ENCODE measurements at regions of chr7 and their contacts with region 1.

Region 1: DNA sequence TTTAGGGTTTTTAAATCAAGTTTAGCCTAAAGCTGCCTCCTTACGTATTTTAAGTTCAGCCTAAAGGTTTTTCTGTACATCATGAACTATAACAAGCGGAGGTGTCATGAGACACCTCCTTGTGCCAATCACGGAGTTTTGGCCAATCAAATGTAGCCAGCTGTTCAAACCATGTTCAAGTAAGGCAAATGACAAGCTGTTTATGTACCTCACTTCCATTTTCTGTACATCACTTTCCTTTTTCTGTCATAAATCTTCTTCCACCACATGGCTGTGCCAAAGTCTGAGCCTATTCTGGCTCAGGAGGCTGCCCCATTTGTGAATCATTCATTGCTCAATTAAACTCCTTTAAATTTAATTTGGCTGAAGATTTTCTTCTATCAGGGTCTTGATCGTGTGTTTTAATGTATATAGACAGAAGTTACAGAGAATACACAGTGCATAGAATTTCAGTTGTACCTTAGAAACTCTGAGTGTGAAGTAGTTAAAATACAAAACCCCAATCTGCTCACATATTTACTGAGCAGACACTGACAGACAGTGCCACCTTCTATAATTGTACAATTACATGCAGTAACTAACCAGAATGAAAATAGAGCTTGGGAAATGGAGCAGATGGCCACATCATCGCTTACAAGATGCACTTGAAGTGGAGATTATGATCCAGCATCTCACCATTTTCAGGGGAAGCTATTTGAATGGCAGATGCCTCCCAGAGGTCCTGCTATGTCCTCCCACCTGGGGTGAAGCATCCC is 76.9 kb upstream of the LANCL2 start:
- DNase-seq: no peak
- H3K4me3 ChIP-seq: no peak overlapping the region
- H3K27ac ChIP-seq: no peak overlapping the region
- H3K4me1 ChIP-seq: no peaks in the 10 kb centered on the region; a peak in 1 of 4 replicates
- H3K27me3 ChIP-seq: 0 out of 2 replicates have a peak, but pooled peaks cover 4% of the 10 kb centered on the region
- CTCF ChIP-seq: peak; percentile 38
- EP300 ChIP-seq: no peak
- RAD21 ChIP-seq: peak; percentile 37

Region 2: DNA sequence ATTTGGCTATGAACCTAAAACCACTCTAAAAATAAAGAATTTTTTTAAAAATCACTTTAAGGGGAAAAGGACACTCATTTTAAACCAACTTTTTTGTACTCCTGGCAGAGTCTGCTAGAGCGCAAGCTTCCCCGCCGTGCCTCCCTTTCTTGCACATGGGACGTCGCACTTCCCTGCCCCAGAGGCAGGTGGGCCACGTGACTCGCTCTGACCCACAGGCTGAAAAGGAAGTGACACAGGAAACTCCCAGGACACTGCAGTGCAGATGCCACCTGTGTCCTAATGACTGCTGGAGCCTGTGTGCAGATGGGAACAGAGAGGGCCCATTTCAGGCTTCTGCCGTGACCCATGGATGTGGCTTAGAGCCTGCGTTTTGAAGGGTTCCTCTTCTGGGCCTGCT is 65.2 kb before region 1 on chr7:
- CTCF ChIA-PET with region 1: no interaction called
- POLR2A ChIA-PET with region 1: no interaction called
- DNase-seq: no peak
- H3K4me3 ChIP-seq: no peak overlapping the region
- H3K27ac ChIP-seq: no peak overlapping the region
- H3K4me1 ChIP-seq: no peaks in the 10 kb centered on the region; a peak in 1 of 4 replicates
- H3K27me3 ChIP-seq: no peaks in the 10 kb centered on the region
- CTCF ChIP-seq: no peak
- EP300 ChIP-seq: no peak
- RAD21 ChIP-seq: no peak

Region 3: GRCh38 chr7:55348499-55348898 is 60.3 kb after region 1 on chr7:
- CTCF ChIA-PET with region 1: no interaction called
- POLR2A ChIA-PET with region 1: no interaction called
- DNase-seq: no peak
- H3K4me3 ChIP-seq: peak overlapping the region in 1 of 2 experiments; percentile 32; a peak in 1 of 4 replicates
- H3K27ac ChIP-seq: peak overlapping the region; percentile 36 to 82; a peak in 3 of 4 replicates
- H3K4me1 ChIP-seq: peaks cover 0 to 16% of the 10 kb centered on the region in 2 experiments; a peak in 2 of 4 replicates
- H3K27me3 ChIP-seq: no peaks in the 10 kb centered on the region
- CTCF ChIP-seq: no peak
- EP300 ChIP-seq: peak in 1 of 2 experiments; percentile 81; a peak in 1 of 4 replicates
- RAD21 ChIP-seq: no peak

Region 4: GRCh38 chr7:55415173-55415778 is 127.0 kb after region 1 on chr7:
- CTCF ChIA-PET with region 1: interaction called, 13 read pairs
- POLR2A ChIA-PET with region 1: no interaction called
- DNase-seq: peak; percentile 88
- H3K4me3 ChIP-seq: no peak overlapping the region
- H3K27ac ChIP-seq: no peak overlapping the region
- H3K4me1 ChIP-seq: peaks cover 0 to 5% of the 10 kb centered on the region in 2 experiments; a peak in 1 of 4 replicates
- H3K27me3 ChIP-seq: no peaks in the 10 kb centered on the region
- CTCF ChIP-seq: peak; percentile 96
- EP300 ChIP-seq: no peak
- RAD21 ChIP-seq: peak; percentile 84

Measured in SK-N-SH (cell line).